PC-9 (cell line): ENCODE measurements at regions of chr15 and their contacts with region 1.

Region 1: DNA sequence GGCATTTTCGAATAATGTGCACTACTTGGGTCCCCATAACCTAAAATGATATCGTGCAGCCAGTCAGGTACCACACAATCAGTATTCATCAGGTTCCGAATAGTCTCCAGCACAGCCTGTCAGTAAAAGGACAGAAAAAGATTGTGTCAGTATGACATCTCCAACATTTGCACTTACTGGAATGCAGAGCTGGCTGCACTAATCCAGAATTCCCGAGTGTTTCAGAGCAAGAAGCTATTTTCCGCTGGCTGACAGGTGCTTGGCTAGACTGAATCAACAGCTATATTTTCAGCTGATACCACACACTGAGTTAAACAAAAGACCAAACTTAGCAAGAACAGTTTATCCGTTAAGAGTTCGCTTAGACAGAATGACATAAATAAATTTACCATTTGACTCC is 68.8 kb downstream of the AQR start:
- DNase-seq: no peak
- H3K4me3 ChIP-seq: no peak overlapping the region
- H3K27ac ChIP-seq: no peak overlapping the region
- H3K4me1 ChIP-seq: no peaks in the 10 kb centered on the region
- H3K27me3 ChIP-seq: no peaks in the 10 kb centered on the region
- CTCF ChIP-seq: no peak

Region 2: GRCh38 chr15:34373951-34374350 is 526.8 kb before region 1 on chr15:
- CTCF ChIA-PET with region 1: no interaction called
- POLR2A ChIA-PET with region 1: no interaction called
- intact Hi-C with region 1: no loop called
- DNase-seq: no peak
- H3K4me3 ChIP-seq: no peak overlapping the region
- H3K27ac ChIP-seq: no peak overlapping the region
- H3K4me1 ChIP-seq: no peaks in the 10 kb centered on the region
- H3K27me3 ChIP-seq: no peaks in the 10 kb centered on the region
- CTCF ChIP-seq: no peak

Region 3: GRCh38 chr15:34679291-34679690 is 221.5 kb before region 1 on chr15:
- CTCF ChIA-PET with region 1: no interaction called
- POLR2A ChIA-PET with region 1: interaction called, 10 read pairs
- intact Hi-C with region 1: no loop called
- DNase-seq: no peak
- H3K4me3 ChIP-seq: no peak overlapping the region
- H3K27ac ChIP-seq: no peak overlapping the region
- H3K4me1 ChIP-seq: no peaks in the 10 kb centered on the region
- H3K27me3 ChIP-seq: peaks cover 18% of the 10 kb centered on the region
- CTCF ChIP-seq: no peak